Tibial artery (tissue), 4 donors: ENCODE measurements at regions of chrX and their contacts with region 1.

Region 1: GRCh38 chrX:48823053-48823452 is 3.3 kb upstream of the ERAS start:
- DNase-seq: no peak
- H3K4me3 ChIP-seq: no peak overlapping the region
- H3K27ac ChIP-seq: no peak overlapping the region
- H3K4me1 ChIP-seq: no peaks in the 10 kb centered on the region
- H3K27me3 ChIP-seq: no peaks in the 10 kb centered on the region
- CTCF ChIP-seq: no peak

Region 2: GRCh38 chrX:48475774-48476577 is 347.1 kb before region 1 on chrX and contains the start of gene FTSJ1:
- intact Hi-C with region 1: no loop called
- DNase-seq: peak; percentile 89 to 93
- H3K4me3 ChIP-seq: peak within 1 kb of the TSS; percentile 73 to 77
- H3K27ac ChIP-seq: peak within 1 kb of the TSS; percentile 87 to 92
- H3K4me1 ChIP-seq: peaks cover 0 to 17% (median 4%) of the 10 kb centered on the region in 4 donors
- H3K27me3 ChIP-seq: no peaks in the 10 kb centered on the region
- CTCF ChIP-seq: no peak

Region 3: DNA sequence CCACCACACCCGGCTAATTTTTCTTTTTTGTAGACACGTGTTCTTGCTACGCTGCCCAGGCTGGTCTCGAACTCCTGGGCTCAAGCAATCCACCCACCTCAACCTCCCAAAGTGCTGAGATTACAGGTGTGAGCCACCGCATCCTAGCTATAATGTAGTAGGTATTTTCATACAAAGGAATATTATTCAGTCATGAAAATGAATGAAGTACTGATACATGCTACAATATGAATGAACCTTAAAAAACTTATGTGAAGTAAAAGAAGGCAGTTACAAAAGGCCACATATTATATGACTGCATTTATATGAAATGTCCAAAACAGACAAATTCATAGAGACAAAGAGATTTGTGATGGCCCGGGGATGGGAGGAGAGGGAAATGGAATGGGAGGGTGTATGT is 41.3 kb before region 1 on chrX:
- intact Hi-C with region 1: loop called (anchors 1 kb)
- DNase-seq: no peak
- H3K4me3 ChIP-seq: no peak overlapping the region
- H3K27ac ChIP-seq: no peak overlapping the region
- H3K4me1 ChIP-seq: no peaks in the 10 kb centered on the region
- H3K27me3 ChIP-seq: peaks cover 0 to 2% of the 10 kb centered on the region in 2 donors
- CTCF ChIP-seq: no peak